RWPE1 (cell line): ENCODE measurements at regions of chr19 and their contacts with region 1.

Region 1: DNA sequence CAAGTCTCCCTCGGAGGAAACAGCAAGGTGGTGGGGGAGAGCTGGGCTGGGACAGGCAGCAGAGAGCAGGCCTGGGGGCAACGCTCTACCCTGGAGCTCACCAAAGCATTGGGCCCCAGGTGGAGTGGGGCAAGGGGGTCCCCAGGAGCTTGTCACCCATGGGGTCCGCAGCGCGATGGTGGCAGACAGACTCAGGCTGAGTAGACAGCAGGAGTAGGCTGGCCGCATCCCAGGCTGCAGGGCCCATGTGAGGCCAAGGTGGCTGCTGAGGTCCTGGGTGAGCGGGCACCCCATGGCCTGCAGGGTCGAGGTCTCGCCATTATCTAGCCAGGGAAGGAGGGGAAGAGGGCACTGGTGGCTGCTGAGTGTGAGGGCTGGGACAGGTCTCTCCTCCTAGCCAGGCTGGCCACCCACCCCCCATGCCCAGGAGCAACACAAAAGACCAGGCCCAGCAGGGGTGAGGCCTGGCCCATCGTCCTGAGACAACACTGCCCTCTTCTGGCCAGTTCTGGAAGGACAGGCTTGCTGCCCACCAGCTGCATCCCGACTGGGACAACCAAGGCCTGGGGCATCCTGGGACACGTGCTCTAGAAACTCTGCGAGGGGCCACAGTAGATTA is 33.1 kb downstream of the CEBPG start:
- DNase-seq: peak; percentile 66
- H3K27ac ChIP-seq: no peak overlapping the region
- CTCF ChIP-seq: peak; percentile 89

Region 2: DNA sequence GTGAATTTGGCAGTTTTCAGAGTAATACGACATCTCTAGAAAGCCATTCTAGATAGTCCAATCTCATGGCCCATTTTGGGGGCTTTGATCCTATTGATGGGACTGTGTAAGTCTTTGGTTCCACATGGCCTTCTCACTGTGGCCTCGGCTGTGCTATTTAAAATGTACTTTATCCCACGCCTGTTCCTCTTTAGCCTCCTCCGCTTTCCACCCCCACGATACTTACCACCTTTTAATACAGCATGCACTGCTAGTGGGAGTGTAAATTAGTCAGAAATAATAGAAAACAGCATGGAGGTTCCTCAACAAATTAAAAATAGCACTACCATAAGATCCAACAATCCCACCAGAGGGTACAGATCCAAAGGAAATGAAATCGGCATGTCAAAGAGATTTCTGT is 61.5 kb before region 1 on chr19:
- CTCF ChIA-PET with region 1: no interaction called
- POLR2A ChIA-PET with region 1: no interaction called
- DNase-seq: no peak
- H3K27ac ChIP-seq: no peak overlapping the region
- CTCF ChIP-seq: no peak

Region 3: GRCh38 chr19:33358408-33358807 is 48.2 kb before region 1 on chr19:
- CTCF ChIA-PET with region 1: no interaction called
- POLR2A ChIA-PET with region 1: no interaction called
- DNase-seq: no peak
- H3K27ac ChIP-seq: no peak overlapping the region
- CTCF ChIP-seq: no peak

Region 4: DNA sequence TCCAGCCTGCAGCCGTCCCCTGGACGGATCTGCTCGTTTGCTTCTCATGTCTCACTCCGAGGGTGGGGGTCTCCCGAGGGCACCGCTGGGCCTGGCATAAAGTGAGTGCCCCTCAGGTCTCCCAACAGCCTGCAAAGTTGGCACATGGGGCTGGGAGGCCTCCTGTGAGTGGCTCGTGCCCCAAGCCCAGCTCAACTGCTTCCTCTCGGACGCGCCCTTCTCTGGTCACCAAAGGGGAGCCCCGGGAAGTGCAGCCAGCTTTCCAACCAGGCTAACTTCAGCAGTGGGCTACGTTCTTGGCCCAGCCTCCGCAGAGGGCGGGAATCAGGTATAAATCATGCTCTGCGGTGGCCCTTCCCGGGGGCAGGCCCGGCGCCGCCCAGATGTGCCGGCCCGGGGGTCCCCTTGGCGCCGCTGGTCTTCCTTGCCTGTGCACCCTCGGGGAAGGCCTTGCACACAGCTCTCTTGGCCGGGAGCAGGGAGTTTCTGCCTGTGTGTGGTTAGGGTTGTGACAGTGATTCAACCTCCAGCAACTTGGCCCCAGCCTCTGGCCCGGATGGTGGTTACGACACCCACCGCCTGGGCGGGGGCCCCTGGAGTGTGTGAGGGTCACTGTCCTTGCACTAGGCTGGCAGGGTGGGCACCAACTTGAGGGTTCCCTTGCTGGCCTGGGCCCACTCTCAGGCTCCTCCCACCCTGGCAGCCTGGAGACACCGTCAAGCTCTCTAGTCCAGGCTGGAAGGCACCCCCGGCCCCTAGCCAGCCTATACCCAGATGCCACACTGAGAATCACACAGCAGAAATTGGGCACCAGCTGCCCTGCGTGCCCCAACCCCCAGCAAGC is 12.4 kb before region 1 on chr19:
- CTCF ChIA-PET with region 1: interaction called, 12 read pairs
- POLR2A ChIA-PET with region 1: no interaction called
- DNase-seq: peak; percentile 66
- H3K27ac ChIP-seq: peak overlapping the region; percentile 86
- CTCF ChIP-seq: no peak

Region 5: GRCh38 chr19:33424176-33424575 is 17.5 kb after region 1 on chr19:
- CTCF ChIA-PET with region 1: no interaction called
- POLR2A ChIA-PET with region 1: no interaction called
- DNase-seq: no peak
- H3K27ac ChIP-seq: no peak overlapping the region
- CTCF ChIP-seq: no peak

Region 6: GRCh38 chr19:33558856-33559255 is 152.2 kb after region 1 on chr19:
- CTCF ChIA-PET with region 1: no interaction called
- POLR2A ChIA-PET with region 1: no interaction called
- DNase-seq: no peak
- H3K27ac ChIP-seq: no peak overlapping the region
- CTCF ChIP-seq: no peak